A673 (cell line): ENCODE measurements at regions of chr20 and their contacts with region 1.

Region 1: DNA sequence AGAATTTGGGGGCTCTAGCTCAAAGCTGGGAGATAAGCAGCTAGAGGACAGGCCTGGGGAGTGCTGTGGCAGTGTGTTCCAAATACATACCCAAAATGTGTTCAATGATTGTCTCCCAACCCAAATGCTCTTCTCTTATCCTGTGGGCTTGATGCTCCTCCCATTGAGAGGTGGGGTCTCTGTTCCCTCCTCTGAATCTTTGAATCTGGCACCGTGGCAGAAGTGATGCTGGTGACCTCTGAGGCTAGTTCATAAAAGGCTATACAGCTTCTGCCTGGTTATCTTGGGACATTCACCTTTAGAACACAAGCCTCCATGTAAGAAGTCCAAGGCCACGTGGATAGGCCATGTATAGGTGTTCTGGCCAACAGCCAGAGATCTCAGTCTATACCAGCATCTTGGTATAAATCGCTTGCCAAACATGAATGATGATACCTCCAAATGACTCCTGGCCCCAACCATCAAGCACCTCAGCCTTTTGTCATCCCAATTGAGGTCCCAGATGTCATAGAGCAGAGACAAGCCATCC is 15.9 kb upstream of the MYBL2 start:
- DNase-seq: no peak
- H3K4me3 ChIP-seq: no peak overlapping the region
- H3K27ac ChIP-seq: no peak overlapping the region
- H3K4me1 ChIP-seq: no peaks in the 10 kb centered on the region
- H3K27me3 ChIP-seq: no peaks in the 10 kb centered on the region
- CTCF ChIP-seq: no peak

Region 2: GRCh38 chr20:44092551-44093248 is 441.6 kb after region 1 on chr20:
- CTCF ChIA-PET with region 1: no interaction called
- POLR2A ChIA-PET with region 1: interaction called, 15 read pairs
- intact Hi-C with region 1: no loop called
- DNase-seq: peak; percentile 76
- H3K4me3 ChIP-seq: no peak overlapping the region
- H3K27ac ChIP-seq: no peak overlapping the region
- H3K4me1 ChIP-seq: no peaks in the 10 kb centered on the region
- H3K27me3 ChIP-seq: no peaks in the 10 kb centered on the region
- CTCF ChIP-seq: peak; percentile 75